CD8-positive, alpha-beta memory T cell (primary cell): ENCODE measurements at regions of chr6 and their contacts with region 1.

Region 1: DNA sequence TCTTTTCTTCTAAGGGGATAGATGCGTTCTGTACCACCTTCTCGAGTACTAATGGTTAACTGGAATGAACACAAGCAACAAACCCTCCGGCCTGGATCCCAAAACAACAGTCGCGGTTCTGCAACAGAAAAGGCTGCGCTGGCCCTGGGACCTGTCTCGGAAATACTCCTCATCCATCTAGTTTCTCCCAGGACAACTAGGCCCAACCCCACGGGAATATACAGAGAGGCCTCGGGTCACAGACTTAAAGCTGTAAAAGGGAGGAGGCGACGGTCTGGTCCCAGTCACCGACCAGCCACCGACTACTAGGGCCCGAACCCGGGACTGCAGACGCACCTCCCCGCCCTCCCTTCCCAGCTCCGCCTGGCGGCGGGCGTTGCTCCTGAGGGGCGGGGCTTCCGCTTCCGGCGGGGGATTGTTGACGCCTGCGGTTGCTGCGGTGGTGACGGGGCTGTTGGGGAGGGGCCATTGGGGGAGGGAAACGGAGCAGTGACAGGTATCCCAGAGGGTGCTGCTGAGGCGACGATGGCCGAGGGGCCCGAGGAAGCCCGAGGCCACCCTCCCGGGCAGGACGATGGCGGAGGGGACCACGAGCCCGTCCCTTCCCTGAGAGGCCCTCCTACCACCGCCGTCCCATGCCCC is at the start of gene FAM8A1:
- DNase-seq: peak; percentile 90 to 96 (median 92)
- H3K4me3 ChIP-seq: peak within 1 kb of the TSS; percentile 57
- H3K4me3 Mint-ChIP-seq: peak within 1 kb of the TSS; percentile 86 to 98 (median 91)
- H3K27ac ChIP-seq: peak within 1 kb of the TSS; percentile 91
- H3K27ac Mint-ChIP-seq: peak within 1 kb of the TSS; percentile 85 to 99 (median 93)
- H3K4me1 ChIP-seq: peaks cover 35% of the 10 kb centered on the region
- H3K4me1 Mint-ChIP-seq: peaks cover 36 to 47% (median 45%) of the 10 kb centered on the region in 3 donors
- H3K27me3 ChIP-seq: no peaks in the 10 kb centered on the region
- H3K27me3 Mint-ChIP-seq: no peaks in the 10 kb centered on the region
- total RNA-seq, gene FAM8A1: 4.7 to 5.1 TPM

Region 2: DNA sequence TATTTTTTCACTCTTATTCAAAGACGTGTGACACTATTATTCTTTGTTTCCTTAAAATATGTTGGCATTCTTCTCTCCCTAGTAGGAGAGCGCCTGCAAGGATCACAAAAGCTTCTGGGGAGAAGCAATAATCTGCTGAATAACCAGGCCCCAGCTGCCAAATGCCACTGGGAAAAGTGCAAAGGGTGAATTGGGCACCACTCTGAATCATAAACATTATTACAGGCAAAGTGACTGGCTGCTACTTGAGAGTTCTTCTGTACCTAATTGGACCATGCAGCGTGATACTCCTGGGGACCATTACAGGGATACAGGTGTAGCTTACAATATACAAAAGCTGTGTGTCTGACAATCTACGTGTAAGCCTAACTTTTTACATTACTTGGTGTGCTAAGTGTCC is 991.6 kb before region 1 on chr6:
- CTCF ChIA-PET with region 1: no interaction called
- POLR2A ChIA-PET with region 1: no interaction called
- DNase-seq: no peak
- H3K4me3 ChIP-seq: no peak overlapping the region
- H3K4me3 Mint-ChIP-seq: no peak overlapping the region
- H3K27ac ChIP-seq: no peak overlapping the region
- H3K27ac Mint-ChIP-seq: peak overlapping the region in 2 of 8 donors; percentile 36 to 60
- H3K4me1 ChIP-seq: peaks cover 4% of the 10 kb centered on the region
- H3K4me1 Mint-ChIP-seq: peaks cover 12 to 31% (median 25%) of the 10 kb centered on the region in 3 donors
- H3K27me3 ChIP-seq: no peaks in the 10 kb centered on the region
- H3K27me3 Mint-ChIP-seq: no peaks in the 10 kb centered on the region

Region 3: DNA sequence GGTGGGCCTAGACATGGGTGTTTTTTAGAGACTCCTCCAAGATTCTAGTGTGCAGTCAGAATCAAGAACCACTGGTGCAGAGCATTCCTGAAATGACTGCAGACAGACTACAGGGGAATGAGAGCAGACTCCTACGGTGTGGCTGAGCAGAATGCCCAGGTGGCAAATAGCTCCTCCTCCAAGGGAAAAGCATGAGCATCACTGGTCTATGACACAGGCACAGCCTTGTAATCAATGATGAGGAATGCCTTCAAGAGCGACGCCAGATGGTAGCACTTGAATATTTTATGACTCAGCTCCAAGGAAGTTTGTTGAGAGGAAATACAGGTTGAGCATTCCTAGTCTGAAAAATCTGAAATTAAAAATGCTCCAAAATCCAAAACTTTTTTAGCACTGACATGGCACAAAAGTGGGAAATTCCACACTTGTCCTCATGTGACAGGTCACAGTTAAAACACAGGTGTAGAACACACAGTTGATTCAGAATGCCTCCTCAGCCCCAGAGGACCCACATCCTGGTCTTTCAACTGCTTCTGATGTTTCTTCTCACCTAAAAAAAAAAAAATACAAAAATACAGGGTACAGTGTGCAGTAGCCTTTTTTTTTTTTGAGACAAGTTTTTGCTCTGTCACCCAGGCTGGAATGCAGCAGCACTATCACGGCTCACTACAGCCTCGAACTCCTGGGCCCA is 10.5 kb before region 1 on chr6:
- CTCF ChIA-PET with region 1: interaction called, 10 read pairs
- POLR2A ChIA-PET with region 1: interaction called, 4 read pairs
- DNase-seq: peak in 2 of 5 donors; percentile 40 to 70
- H3K4me3 ChIP-seq: no peak overlapping the region
- H3K4me3 Mint-ChIP-seq: no peak overlapping the region
- H3K27ac ChIP-seq: no peak overlapping the region
- H3K27ac Mint-ChIP-seq: peak overlapping the region in 7 of 8 donors; percentile 29 to 75 (median 44)
- H3K4me1 ChIP-seq: peaks cover 15% of the 10 kb centered on the region
- H3K4me1 Mint-ChIP-seq: peaks cover 14 to 25% (median 16%) of the 10 kb centered on the region in 3 donors
- H3K27me3 ChIP-seq: no peaks in the 10 kb centered on the region
- H3K27me3 Mint-ChIP-seq: peaks cover 0 to 2% of the 10 kb centered on the region in 2 donors

Region 4: GRCh38 chr6:17700421-17701416 is 100.7 kb after region 1 on chr6:
- CTCF ChIA-PET with region 1: interaction called, 23 read pairs
- POLR2A ChIA-PET with region 1: interaction called, 40 read pairs
- DNase-seq: no peak
- H3K4me3 ChIP-seq: no peak overlapping the region
- H3K4me3 Mint-ChIP-seq: peak overlapping the region in 3 of 7 donors; percentile 24 to 44 (median 38)
- H3K27ac ChIP-seq: no peak overlapping the region
- H3K27ac Mint-ChIP-seq: peak overlapping the region in 7 of 8 donors; percentile 16 to 91 (median 47)
- H3K4me1 ChIP-seq: peaks cover 52% of the 10 kb centered on the region
- H3K4me1 Mint-ChIP-seq: peaks cover 49 to 74% (median 74%) of the 10 kb centered on the region in 3 donors
- H3K27me3 ChIP-seq: no peaks in the 10 kb centered on the region
- H3K27me3 Mint-ChIP-seq: no peaks in the 10 kb centered on the region

Region 5: GRCh38 chr6:17706580-17707370 is 106.8 kb after region 1 on chr6 and contains the start of gene NUP153:
- CTCF ChIA-PET with region 1: interaction called, 23 read pairs
- POLR2A ChIA-PET with region 1: interaction called, 40 read pairs
- DNase-seq: peak; percentile 98 to 100 (median 99)
- H3K4me3 ChIP-seq: peak within 1 kb of the TSS; percentile 95
- H3K4me3 Mint-ChIP-seq: peak within 1 kb of the TSS; percentile 85 to 98 (median 91)
- H3K27ac ChIP-seq: peak within 1 kb of the TSS; percentile 99
- H3K27ac Mint-ChIP-seq: peak within 1 kb of the TSS; percentile 91 to 99 (median 96)
- H3K4me1 ChIP-seq: peaks cover 43% of the 10 kb centered on the region
- H3K4me1 Mint-ChIP-seq: peaks cover 29 to 44% (median 44%) of the 10 kb centered on the region in 3 donors
- H3K27me3 ChIP-seq: no peaks in the 10 kb centered on the region
- H3K27me3 Mint-ChIP-seq: peaks cover 0 to 4% of the 10 kb centered on the region in 2 donors
- total RNA-seq, gene NUP153: 97.4 to 104 TPM